PC-9 (cell line): ENCODE measurements at regions of chr3 and their contacts with region 1.

Region 1: GRCh38 chr3:171646357-171647133 is 163.7 kb downstream of the PLD1 start:
- DNase-seq: peak in 1 of 2 experiments; percentile 51
- H3K4me3 ChIP-seq: no peak overlapping the region
- H3K27ac ChIP-seq: no peak overlapping the region
- H3K4me1 ChIP-seq: no peaks in the 10 kb centered on the region
- H3K27me3 ChIP-seq: no peaks in the 10 kb centered on the region
- CTCF ChIP-seq: peak; percentile 90

Region 2: DNA sequence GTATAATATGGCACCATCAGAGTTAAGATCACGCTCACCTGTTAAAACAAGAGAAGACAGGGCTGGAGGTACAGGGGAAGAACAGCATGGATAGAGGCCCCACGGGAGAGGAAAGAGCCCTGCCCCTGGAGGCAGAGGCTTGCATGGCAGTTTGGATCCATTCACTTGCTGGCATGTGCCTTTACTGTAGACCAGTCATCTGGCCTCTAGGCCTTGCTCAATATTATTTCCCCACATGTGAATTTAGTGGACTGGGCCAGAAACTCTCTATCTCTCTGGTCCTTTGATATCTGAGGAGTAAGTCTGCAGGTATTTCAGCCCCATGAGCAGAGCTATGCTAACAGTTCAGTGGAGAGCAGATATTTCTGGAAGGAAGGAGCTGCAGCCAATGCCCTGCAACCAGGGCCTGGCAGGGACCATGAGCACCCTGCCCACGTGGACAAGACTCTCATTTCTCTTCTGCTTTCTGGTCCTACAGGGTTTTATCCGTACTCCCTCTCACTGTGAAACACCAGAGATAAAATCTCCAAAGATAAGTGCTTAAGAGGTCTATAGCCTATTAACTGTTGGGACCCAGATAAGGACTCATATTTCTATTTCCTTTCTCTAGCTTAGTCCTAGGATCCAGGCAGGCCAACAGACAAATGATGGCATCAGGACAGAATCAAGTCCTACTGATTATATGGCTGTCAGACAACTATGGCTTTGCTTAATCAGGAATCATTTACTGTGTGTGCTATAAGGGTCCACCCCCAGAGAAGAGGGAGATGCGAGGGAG is 1162.9 kb before region 1 on chr3:
- CTCF ChIA-PET with region 1: no interaction called
- POLR2A ChIA-PET with region 1: no interaction called
- intact Hi-C with region 1: no loop called
- DNase-seq: no peak
- H3K4me3 ChIP-seq: no peak overlapping the region
- H3K27ac ChIP-seq: no peak overlapping the region
- H3K4me1 ChIP-seq: peaks cover 7% of the 10 kb centered on the region
- H3K27me3 ChIP-seq: no peaks in the 10 kb centered on the region
- CTCF ChIP-seq: peak; percentile 36; the same call in 1 of the 2 replicates

Region 3: DNA sequence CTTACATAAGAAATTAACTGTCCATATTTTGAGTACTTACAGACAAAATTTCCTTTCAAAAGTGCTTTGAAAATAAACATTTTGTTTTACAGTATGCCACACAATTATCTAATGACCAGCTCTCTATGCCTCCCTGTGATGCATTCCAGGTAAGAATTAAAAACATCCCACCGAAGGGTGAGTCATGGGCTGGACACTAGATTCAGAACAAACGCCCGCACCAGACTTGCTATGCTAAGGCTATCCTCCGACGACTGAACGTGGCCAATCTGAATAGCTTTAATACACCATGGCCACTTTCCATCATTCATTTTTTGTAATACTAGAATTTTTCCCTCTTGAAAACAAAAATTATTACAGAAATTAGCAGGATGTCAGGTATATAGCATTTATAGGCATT is 46.5 kb before region 1 on chr3:
- CTCF ChIA-PET with region 1: no interaction called
- POLR2A ChIA-PET with region 1: no interaction called
- intact Hi-C with region 1: no loop called
- DNase-seq: no peak
- H3K4me3 ChIP-seq: no peak overlapping the region
- H3K27ac ChIP-seq: no peak overlapping the region
- H3K4me1 ChIP-seq: no peaks in the 10 kb centered on the region
- H3K27me3 ChIP-seq: no peaks in the 10 kb centered on the region
- CTCF ChIP-seq: no peak

Region 4: GRCh38 chr3:171622126-171622525 is 24.4 kb before region 1 on chr3:
- CTCF ChIA-PET with region 1: interaction called, 13 read pairs
- POLR2A ChIA-PET with region 1: no interaction called
- intact Hi-C with region 1: no loop called
- DNase-seq: no peak
- H3K4me3 ChIP-seq: no peak overlapping the region
- H3K27ac ChIP-seq: no peak overlapping the region
- H3K4me1 ChIP-seq: no peaks in the 10 kb centered on the region; the same call in 1 of the 2 replicates
- H3K27me3 ChIP-seq: no peaks in the 10 kb centered on the region
- CTCF ChIP-seq: no peak

Region 5: DNA sequence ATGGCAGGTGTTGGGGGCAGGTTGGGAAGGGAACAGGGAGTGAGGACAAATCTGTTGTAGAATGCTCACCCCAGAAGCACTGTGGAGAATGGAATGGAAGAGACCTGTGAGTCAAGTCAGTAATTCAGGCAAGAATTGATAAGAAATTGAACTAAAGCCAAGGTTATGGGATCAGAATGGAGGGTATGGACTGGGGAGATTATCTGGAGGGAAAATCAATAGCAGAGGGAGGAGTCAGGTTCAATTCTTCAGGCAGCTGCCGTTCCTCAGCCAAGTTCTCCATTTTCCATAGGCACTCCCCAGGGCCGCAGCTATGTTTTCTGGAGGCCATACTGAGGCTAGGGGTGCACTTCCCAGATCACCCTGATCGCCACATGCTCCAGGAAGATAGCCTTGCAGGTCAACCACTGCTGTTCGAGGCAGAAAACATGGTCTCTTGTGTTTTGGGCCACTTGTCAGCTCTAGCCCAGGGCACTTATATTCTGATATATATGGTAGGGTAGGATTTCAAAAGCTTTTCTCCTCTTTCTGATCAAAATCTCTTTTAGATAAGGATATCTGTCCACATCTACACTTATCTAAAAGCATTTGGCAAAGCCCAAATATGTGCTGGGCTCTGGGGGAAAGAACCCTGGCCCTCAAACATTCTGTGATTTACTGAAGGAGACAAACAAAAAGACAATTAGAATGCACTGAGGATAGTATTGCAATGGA is 288.9 kb after region 1 on chr3:
- CTCF ChIA-PET with region 1: no interaction called
- POLR2A ChIA-PET with region 1: interaction called, 11 read pairs
- intact Hi-C with region 1: no loop called
- DNase-seq: peak in 1 of 2 experiments; percentile 56
- H3K4me3 ChIP-seq: peak overlapping the region; percentile 28; the same call in 1 of the 2 replicates
- H3K27ac ChIP-seq: peak overlapping the region; percentile 95
- H3K4me1 ChIP-seq: peaks cover 53% of the 10 kb centered on the region
- H3K27me3 ChIP-seq: no peaks in the 10 kb centered on the region
- CTCF ChIP-seq: no peak

Region 6: DNA sequence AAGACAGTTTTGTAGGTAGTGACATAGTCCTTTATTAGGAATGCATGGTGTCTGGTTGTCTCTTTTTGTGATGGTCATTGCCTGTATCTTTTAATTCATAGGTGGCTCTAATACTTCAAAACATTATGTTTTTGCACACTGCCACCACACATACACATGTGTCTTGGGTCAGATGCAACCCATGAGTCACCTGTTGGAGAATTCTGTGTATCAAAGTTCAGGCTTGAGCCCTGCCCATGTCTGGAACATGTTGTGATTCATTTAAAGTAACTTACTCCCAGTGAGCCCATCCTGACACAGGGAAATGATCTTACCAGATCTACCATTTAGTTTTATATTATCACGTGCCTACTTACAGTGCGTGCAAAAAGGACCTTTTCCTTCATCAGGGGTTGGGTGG is 659.0 kb after region 1 on chr3:
- CTCF ChIA-PET with region 1: interaction called, 3 read pairs
- POLR2A ChIA-PET with region 1: interaction called, 13 read pairs
- intact Hi-C with region 1: no loop called
- DNase-seq: peak in 1 of 2 experiments; percentile 87
- H3K4me3 ChIP-seq: 0 out of 2 replicates have a peak overlapping the region, but pooled peaks have one; percentile 2
- H3K27ac ChIP-seq: peak overlapping the region; percentile 78
- H3K4me1 ChIP-seq: peaks cover 46% of the 10 kb centered on the region
- H3K27me3 ChIP-seq: no peaks in the 10 kb centered on the region
- CTCF ChIP-seq: no peak

Region 7: DNA sequence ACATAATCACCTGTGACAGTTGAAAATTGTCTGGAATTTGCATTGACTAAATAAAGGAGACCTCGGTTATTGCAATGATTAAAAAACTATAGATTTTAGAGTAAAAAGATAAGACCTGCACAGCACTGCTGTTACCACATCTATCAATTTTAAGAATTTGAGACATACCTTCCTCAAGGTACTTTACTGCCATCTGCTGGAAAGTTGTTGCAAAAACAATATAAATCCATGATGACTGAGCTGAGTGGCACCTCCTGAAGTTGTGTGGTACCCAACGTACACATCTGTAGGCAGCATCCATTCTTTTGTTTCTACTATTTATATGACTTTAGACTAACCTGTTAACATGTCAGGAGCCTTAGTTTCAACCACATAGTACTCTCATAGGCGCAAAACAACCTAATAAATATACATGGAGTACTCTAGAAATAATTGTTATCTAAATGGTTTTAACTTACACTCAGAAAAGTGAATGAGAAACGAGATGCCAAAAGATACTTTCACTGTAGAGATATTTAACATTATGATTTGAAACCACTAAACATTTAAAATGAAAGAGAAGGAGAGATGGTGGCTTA is 695.0 kb after region 1 on chr3:
- CTCF ChIA-PET with region 1: no interaction called
- POLR2A ChIA-PET with region 1: no interaction called
- intact Hi-C with region 1: loop called (anchors 1 kb)
- DNase-seq: peak; percentile 24 to 77
- H3K4me3 ChIP-seq: no peak overlapping the region
- H3K27ac ChIP-seq: no peak overlapping the region
- H3K4me1 ChIP-seq: peaks cover 6% of the 10 kb centered on the region; the same call in 1 of the 2 replicates
- H3K27me3 ChIP-seq: no peaks in the 10 kb centered on the region
- CTCF ChIP-seq: peak; percentile 89

Region 8: DNA sequence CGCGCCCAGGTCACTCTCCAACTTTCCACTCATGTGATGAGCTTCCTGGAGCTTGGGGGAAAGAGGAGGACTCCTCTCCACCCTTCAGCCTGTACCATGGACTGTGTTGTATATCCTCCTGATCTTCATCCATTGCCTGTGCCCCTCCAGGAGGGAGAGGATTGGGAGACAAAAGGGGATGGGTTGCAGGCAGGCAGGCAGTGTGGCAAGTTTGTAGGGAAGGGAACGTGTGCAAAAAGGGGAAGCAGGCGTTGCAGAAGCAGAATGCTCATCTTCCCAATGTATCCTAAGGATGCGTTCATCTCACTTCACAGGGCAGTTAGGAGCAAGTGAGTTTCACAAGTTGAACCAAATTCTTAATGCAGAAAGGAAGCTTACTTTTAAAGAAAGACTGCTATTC is 829.8 kb after region 1 on chr3:
- CTCF ChIA-PET with region 1: no interaction called
- POLR2A ChIA-PET with region 1: no interaction called
- intact Hi-C with region 1: loop called (anchors 10 kb)
- DNase-seq: no peak
- H3K4me3 ChIP-seq: peak overlapping the region; percentile 69
- H3K27ac ChIP-seq: no peak overlapping the region
- H3K4me1 ChIP-seq: 0 out of 2 replicates have a peak, but pooled peaks cover 5% of the 10 kb centered on the region
- H3K27me3 ChIP-seq: no peaks in the 10 kb centered on the region
- CTCF ChIP-seq: no peak